Uterus (tissue), 4 donors: ENCODE measurements at regions of chr15 and their contacts with region 1.

Region 1: DNA sequence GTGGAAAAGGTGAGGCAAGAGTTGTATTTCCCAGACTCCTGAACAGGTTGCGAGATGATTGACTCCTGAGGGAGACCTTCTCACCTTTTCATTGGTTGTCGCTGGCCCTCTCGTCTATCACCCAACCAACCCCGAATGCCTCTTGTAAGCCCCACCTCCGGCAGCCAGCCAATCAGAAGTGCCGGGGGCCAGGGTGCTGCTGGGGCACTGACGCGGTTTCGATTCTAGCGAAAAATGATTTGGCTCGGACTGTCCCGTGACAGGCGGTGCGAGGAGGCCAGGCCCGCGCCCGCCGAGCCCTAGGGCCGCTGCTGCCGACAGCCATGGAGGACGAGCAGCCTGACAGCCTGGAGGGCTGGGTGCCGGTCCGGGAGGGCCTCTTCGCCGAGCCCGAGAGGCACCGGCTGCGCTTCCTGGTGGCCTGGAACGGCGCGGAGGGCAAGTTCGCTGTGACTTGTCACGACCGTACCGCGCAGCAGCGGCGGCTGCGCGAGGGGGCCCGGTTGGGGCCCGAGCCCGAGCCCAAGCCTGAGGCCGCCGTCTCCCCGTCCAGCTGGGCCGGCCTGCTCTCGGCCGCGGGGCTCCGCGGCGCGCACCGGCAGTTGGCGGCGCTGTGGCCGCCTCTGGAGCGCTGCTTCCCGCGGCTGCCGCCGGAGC is at the start of gene WHAMM:
- DNase-seq: peak; percentile 98 to 99
- H3K4me3 ChIP-seq: peak within 1 kb of the TSS; percentile 82 to 99
- H3K27ac ChIP-seq: peak within 1 kb of the TSS; percentile 99 to 100
- H3K4me1 ChIP-seq: peaks cover 4 to 5% of the 10 kb centered on the region in 2 donors
- H3K27me3 ChIP-seq: no peaks in the 10 kb centered on the region
- CTCF ChIP-seq: peak in 2 of 4 experiments; percentile 27 to 32
- POLR2A ChIP-seq: peak; percentile 94 to 98
- total RNA-seq, gene WHAMM: 3.5 to 10.8 (median 5.2) TPM

Region 2: GRCh38 chr15:82393671-82394070 is 415.9 kb before region 1 on chr15:
- intact Hi-C with region 1: no loop called
- DNase-seq: no peak
- H3K4me3 ChIP-seq: no peak overlapping the region
- H3K27ac ChIP-seq: no peak overlapping the region
- H3K4me1 ChIP-seq: no peaks in the 10 kb centered on the region
- H3K27me3 ChIP-seq: no peaks in the 10 kb centered on the region
- CTCF ChIP-seq: no peak
- POLR2A ChIP-seq: no peak

Region 3: GRCh38 chr15:82624008-82624837 is 185.3 kb before region 1 on chr15:
- intact Hi-C with region 1: no loop called
- DNase-seq: no peak
- H3K4me3 ChIP-seq: no peak overlapping the region
- H3K27ac ChIP-seq: no peak overlapping the region
- H3K4me1 ChIP-seq: no peaks in the 10 kb centered on the region
- H3K27me3 ChIP-seq: no peaks in the 10 kb centered on the region
- CTCF ChIP-seq: no peak
- POLR2A ChIP-seq: no peak

Region 4: DNA sequence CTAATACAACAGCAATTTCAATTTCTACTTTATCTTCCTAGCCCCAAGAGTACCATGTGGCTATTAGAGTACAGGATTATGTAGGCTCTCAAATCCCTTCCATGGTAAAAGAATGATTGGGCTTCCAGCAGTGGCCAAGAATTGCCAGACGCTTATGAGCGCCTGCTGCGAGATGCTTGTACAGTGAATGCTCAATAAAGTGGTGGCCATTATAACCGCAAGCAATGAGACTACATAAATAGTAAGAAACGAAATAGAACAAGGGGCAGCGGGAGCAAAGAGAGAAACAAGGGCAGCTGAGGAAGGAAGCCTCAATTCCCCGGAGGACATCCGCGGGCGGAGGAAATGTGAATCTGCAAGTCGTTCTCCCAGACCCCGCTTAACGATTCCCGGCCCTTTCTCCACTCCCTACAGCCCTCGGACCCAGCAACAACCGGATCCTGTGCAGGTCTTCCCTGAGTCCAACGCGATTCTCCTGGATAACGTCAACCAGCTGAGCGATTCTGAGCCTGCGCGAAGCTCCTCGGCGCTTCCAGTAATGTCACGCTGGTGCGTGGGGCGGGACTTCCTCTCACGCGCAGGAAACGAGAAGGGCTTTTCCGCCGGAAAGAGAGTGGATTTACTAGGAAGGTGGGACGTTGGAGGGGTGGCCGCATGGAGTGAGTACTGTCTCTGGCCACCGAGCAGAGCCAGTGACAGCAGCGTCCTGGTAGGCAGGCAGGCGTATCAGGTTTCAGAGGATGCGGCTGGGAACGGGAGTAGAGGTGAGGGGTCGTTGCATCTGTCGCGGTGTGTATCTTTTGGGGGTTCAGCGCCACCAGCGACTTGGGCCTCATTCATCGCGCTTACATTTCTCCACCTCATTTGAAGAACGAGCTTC is 59.3 kb before region 1 on chr15:
- intact Hi-C with region 1: loop called (anchors 10 kb)
- DNase-seq: peak; percentile 89 to 90
- H3K4me3 ChIP-seq: peak overlapping the region; percentile 61 to 75
- H3K27ac ChIP-seq: peak overlapping the region; percentile 81 to 94
- H3K4me1 ChIP-seq: peaks cover 0 to 7% of the 10 kb centered on the region in 2 donors
- H3K27me3 ChIP-seq: no peaks in the 10 kb centered on the region
- CTCF ChIP-seq: peak in 1 of 4 experiments; percentile 8
- POLR2A ChIP-seq: peak; percentile 61 to 71